B cell (primary cell): ENCODE measurements at regions of chr3 and their contacts with region 1.

Region 1: GRCh38 chr3:63993653-63994079 is 29.6 kb downstream of the PSMD6 start:
- DNase-seq: peak; percentile 60
- ATAC-seq: peak; percentile 75
- H3K4me3 ChIP-seq: no peak overlapping the region
- H3K4me3 Mint-ChIP-seq: no peak overlapping the region
- H3K27ac ChIP-seq: no peak overlapping the region
- H3K27ac Mint-ChIP-seq: no peak overlapping the region
- H3K4me1 ChIP-seq: no peaks in the 10 kb centered on the region
- H3K4me1 Mint-ChIP-seq: no peaks in the 10 kb centered on the region
- H3K27me3 ChIP-seq: no peaks in the 10 kb centered on the region
- H3K27me3 Mint-ChIP-seq: no peaks in the 10 kb centered on the region
- CTCF ChIP-seq: peak; percentile 96

Region 2: GRCh38 chr3:63240381-63240917 is 753.2 kb before region 1 on chr3:
- CTCF ChIA-PET with region 1: no interaction called
- POLR2A ChIA-PET with region 1: no interaction called
- intact Hi-C with region 1: no loop called
- DNase-seq: no peak
- ATAC-seq: no peak
- H3K4me3 ChIP-seq: no peak overlapping the region
- H3K4me3 Mint-ChIP-seq: no peak overlapping the region
- H3K27ac ChIP-seq: no peak overlapping the region
- H3K27ac Mint-ChIP-seq: no peak overlapping the region
- H3K4me1 ChIP-seq: no peaks in the 10 kb centered on the region
- H3K4me1 Mint-ChIP-seq: no peaks in the 10 kb centered on the region
- H3K27me3 ChIP-seq: no peaks in the 10 kb centered on the region
- H3K27me3 Mint-ChIP-seq: peaks cover 2% of the 10 kb centered on the region
- CTCF ChIP-seq: no peak

Region 3: GRCh38 chr3:63863148-63864007 is 130.3 kb before region 1 on chr3 and contains the starts of genes ATXN7 and THOC7:
- CTCF ChIA-PET with region 1: no interaction called
- POLR2A ChIA-PET with region 1: no interaction called
- intact Hi-C with region 1: loop called (anchors 1 kb)
- DNase-seq: peak; percentile 87
- ATAC-seq: peak; percentile 77
- H3K4me3 ChIP-seq: peak within 1 kb of the TSS; percentile 58 to 96 (median 84)
- H3K4me3 Mint-ChIP-seq: peak within 1 kb of the TSS; percentile 97
- H3K27ac ChIP-seq: peak within 1 kb of the TSS; percentile 64 to 88
- H3K27ac Mint-ChIP-seq: peak within 1 kb of the TSS; percentile 97
- H3K4me1 ChIP-seq: peaks cover 16 to 19% of the 10 kb centered on the region in 2 donors
- H3K4me1 Mint-ChIP-seq: peaks cover 55% of the 10 kb centered on the region
- H3K27me3 ChIP-seq: no peaks in the 10 kb centered on the region
- H3K27me3 Mint-ChIP-seq: no peaks in the 10 kb centered on the region
- CTCF ChIP-seq: no peak
- total RNA-seq, gene ATXN7: 74.3 and 74.7 TPM in 2 replicates
- total RNA-seq, gene THOC7: 30.5 and 31.5 TPM in 2 replicates

Region 4: DNA sequence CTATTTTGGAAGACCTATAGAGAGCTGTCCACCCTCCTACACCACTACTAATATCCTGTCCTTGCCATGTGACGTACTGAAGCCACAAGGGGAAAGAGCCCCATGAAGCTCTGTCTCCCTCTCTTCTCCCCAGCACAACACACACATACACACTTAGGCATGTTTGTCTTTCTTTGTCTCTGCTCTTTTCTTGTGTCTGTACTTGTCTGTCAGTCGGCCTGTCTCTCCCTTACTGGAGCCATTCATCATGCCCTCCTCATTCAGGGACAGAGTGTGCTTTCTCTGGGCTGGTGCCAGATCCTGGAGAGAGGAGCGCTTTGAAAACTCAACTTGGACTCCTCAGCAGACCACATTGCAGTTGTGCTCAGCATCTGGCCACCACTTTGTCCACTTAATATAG is 17.9 kb before region 1 on chr3:
- CTCF ChIA-PET with region 1: interaction called, 27 read pairs
- POLR2A ChIA-PET with region 1: no interaction called
- intact Hi-C with region 1: no loop called
- DNase-seq: no peak
- ATAC-seq: no peak
- H3K4me3 ChIP-seq: no peak overlapping the region
- H3K4me3 Mint-ChIP-seq: no peak overlapping the region
- H3K27ac ChIP-seq: no peak overlapping the region
- H3K27ac Mint-ChIP-seq: no peak overlapping the region
- H3K4me1 ChIP-seq: peaks cover 0 to 8% of the 10 kb centered on the region in 2 donors
- H3K4me1 Mint-ChIP-seq: peaks cover 30% of the 10 kb centered on the region
- H3K27me3 ChIP-seq: no peaks in the 10 kb centered on the region
- H3K27me3 Mint-ChIP-seq: no peaks in the 10 kb centered on the region
- CTCF ChIP-seq: no peak

Region 5: GRCh38 chr3:64008017-64008971 is 14.6 kb after region 1 on chr3:
- CTCF ChIA-PET with region 1: interaction called, 17 read pairs
- POLR2A ChIA-PET with region 1: no interaction called
- intact Hi-C with region 1: no loop called
- DNase-seq: no peak
- ATAC-seq: no peak
- H3K4me3 ChIP-seq: no peak overlapping the region
- H3K4me3 Mint-ChIP-seq: no peak overlapping the region
- H3K27ac ChIP-seq: peak overlapping the region in 1 of 2 donors; percentile 4
- H3K27ac Mint-ChIP-seq: no peak overlapping the region
- H3K4me1 ChIP-seq: no peaks in the 10 kb centered on the region
- H3K4me1 Mint-ChIP-seq: no peaks in the 10 kb centered on the region
- H3K27me3 ChIP-seq: no peaks in the 10 kb centered on the region
- H3K27me3 Mint-ChIP-seq: no peaks in the 10 kb centered on the region
- CTCF ChIP-seq: no peak

Region 6: DNA sequence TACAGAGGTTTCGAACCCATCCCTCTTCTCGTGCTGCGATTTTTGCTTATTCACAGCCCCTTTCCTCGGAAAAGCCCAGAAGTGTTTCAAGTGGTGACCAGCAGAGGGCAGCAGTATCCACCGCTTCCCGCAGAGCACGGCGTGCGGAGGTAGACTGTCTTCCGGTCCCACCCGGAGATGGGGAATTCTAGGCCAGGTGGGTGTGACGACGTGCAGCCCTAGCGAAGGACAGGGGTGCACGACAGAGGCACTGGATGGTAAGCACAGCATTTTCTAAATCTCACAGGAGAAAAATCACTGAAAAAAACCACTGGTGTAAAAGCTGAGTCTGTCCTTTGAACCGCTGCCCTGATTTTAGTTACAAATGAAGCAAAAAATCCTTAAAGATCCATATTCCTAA is 37.1 kb after region 1 on chr3:
- CTCF ChIA-PET with region 1: no interaction called
- POLR2A ChIA-PET with region 1: no interaction called
- intact Hi-C with region 1: no loop called
- DNase-seq: peak; percentile 88
- ATAC-seq: peak; percentile 96
- H3K4me3 ChIP-seq: peak overlapping the region; percentile 11 to 55 (median 41)
- H3K4me3 Mint-ChIP-seq: peak overlapping the region; percentile 89
- H3K27ac ChIP-seq: peak overlapping the region in 1 of 2 donors; percentile 11
- H3K27ac Mint-ChIP-seq: peak overlapping the region; percentile 69
- H3K4me1 ChIP-seq: peaks cover 3 to 8% of the 10 kb centered on the region in 2 donors
- H3K4me1 Mint-ChIP-seq: peaks cover 7% of the 10 kb centered on the region
- H3K27me3 ChIP-seq: peaks cover 2 to 20% (median 11%) of the 10 kb centered on the region in 4 experiments
- H3K27me3 Mint-ChIP-seq: peaks cover 24% of the 10 kb centered on the region
- CTCF ChIP-seq: peak; percentile 91

Region 7: DNA sequence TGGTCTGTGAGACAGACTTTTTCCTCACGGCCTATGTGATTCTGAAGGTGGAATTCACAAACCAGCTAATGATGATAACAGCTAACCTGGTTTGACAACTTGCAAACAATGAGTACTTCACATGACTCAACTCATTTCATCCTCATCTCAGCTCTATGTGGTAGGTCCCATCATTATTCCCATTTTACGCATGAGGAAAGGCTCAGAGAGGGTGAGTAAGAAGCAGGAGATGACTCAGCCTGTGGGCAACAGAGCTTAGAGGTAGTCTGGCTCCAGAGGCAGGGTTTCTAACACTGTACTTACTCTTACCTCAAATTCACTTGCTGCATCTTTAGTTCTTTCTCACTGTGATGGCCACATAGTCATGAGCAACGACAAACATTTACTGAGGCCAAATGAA is 55.5 kb after region 1 on chr3:
- CTCF ChIA-PET with region 1: no interaction called
- POLR2A ChIA-PET with region 1: no interaction called
- intact Hi-C with region 1: no loop called
- DNase-seq: no peak
- ATAC-seq: no peak
- H3K4me3 ChIP-seq: no peak overlapping the region
- H3K4me3 Mint-ChIP-seq: no peak overlapping the region
- H3K27ac ChIP-seq: no peak overlapping the region
- H3K27ac Mint-ChIP-seq: no peak overlapping the region
- H3K4me1 ChIP-seq: no peaks in the 10 kb centered on the region
- H3K4me1 Mint-ChIP-seq: peaks cover 7% of the 10 kb centered on the region
- H3K27me3 ChIP-seq: peaks cover 0 to 7% (median 3%) of the 10 kb centered on the region in 4 experiments
- H3K27me3 Mint-ChIP-seq: peaks cover 7% of the 10 kb centered on the region
- CTCF ChIP-seq: no peak

Region 8: DNA sequence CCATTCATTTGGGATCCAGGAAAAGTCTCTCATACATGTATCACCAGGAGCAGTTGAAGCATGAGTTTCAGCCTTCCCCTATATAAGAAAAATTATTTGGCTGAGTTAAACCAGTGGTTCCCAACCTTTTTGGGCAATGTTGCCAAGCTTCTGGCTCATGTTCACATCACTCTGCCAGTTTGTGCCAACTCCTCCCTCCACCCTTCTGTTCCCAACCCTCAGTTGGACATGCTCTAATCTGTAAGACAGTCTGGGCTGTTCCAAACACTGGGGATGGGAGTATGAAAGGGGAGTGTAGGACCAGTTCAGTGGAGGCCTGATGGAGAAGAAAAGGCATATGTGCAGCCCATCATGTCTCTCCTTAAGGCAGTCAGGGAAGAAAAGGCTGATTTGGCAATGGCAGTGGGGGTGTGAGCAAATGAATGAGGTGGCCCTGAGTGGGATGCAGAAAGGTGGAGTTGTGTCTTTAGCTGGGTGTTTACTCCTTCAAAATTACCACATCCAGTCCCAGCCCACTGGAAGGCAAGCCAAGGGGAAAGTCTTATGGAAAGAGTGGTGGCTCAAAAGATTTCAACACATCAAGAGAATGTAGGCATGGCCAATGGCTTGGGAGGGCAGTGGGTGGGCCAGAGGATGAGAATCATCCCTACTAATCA is 263.6 kb after region 1 on chr3:
- CTCF ChIA-PET with region 1: no interaction called
- POLR2A ChIA-PET with region 1: no interaction called
- intact Hi-C with region 1: no loop called
- DNase-seq: no peak
- ATAC-seq: no peak
- H3K4me3 ChIP-seq: no peak overlapping the region
- H3K4me3 Mint-ChIP-seq: no peak overlapping the region
- H3K27ac ChIP-seq: no peak overlapping the region
- H3K27ac Mint-ChIP-seq: no peak overlapping the region
- H3K4me1 ChIP-seq: no peaks in the 10 kb centered on the region
- H3K4me1 Mint-ChIP-seq: no peaks in the 10 kb centered on the region
- H3K27me3 ChIP-seq: peaks cover 0 to under 1% (median 0%) of the 10 kb centered on the region in 4 experiments
- H3K27me3 Mint-ChIP-seq: peaks cover 16% of the 10 kb centered on the region
- CTCF ChIP-seq: no peak